Dendritic cell treated with granulocyte-macrophage colony-stimulating factor and Interleukin-4, amounts not matched to agents 40 ng/mL and 50 ng/mL, for 4 days (primary cell): ENCODE measurements at regions of chr1 and their contacts with region 1.

Region 1: GRCh38 chr1:224223819-224224714 is 41.0 kb downstream of the DEGS1 start:
- H3K4me3 Mint-ChIP-seq: no peak overlapping the region
- H3K27ac Mint-ChIP-seq: no peak overlapping the region
- H3K4me1 Mint-ChIP-seq: peaks cover 24% of the 10 kb centered on the region
- H3K27me3 Mint-ChIP-seq: no peaks in the 10 kb centered on the region

Region 2: GRCh38 chr1:224189561-224189960 is 34.5 kb before region 1 on chr1:
- intact Hi-C with region 1: loop called (anchors 5 kb)
- H3K4me3 Mint-ChIP-seq: no peak overlapping the region
- H3K27ac Mint-ChIP-seq: no peak overlapping the region
- H3K4me1 Mint-ChIP-seq: peaks cover 38% of the 10 kb centered on the region
- H3K27me3 Mint-ChIP-seq: no peaks in the 10 kb centered on the region